A673 (cell line): ENCODE measurements at regions of chr5 and their contacts with region 1.

Region 1: GRCh38 chr5:172697123-172698121 is 56.4 kb downstream of the NEURL1B start:
- DNase-seq: peak; percentile 82
- H3K4me3 ChIP-seq: peak overlapping the region; percentile 55
- H3K27ac ChIP-seq: peak overlapping the region; percentile 75
- H3K4me1 ChIP-seq: no peaks in the 10 kb centered on the region
- H3K27me3 ChIP-seq: no peaks in the 10 kb centered on the region
- CTCF ChIP-seq: peak; percentile 80

Region 2: GRCh38 chr5:172106511-172107356 is 590.7 kb before region 1 on chr5:
- CTCF ChIA-PET with region 1: no interaction called
- POLR2A ChIA-PET with region 1: no interaction called
- intact Hi-C with region 1: loop called (anchors 5 kb)
- DNase-seq: peak; percentile 62
- H3K4me3 ChIP-seq: peak overlapping the region; percentile 39
- H3K27ac ChIP-seq: no peak overlapping the region
- H3K4me1 ChIP-seq: peaks cover 3% of the 10 kb centered on the region
- H3K27me3 ChIP-seq: no peaks in the 10 kb centered on the region
- CTCF ChIP-seq: peak; percentile 94

Region 3: GRCh38 chr5:172479044-172479783 is 218.2 kb before region 1 on chr5:
- CTCF ChIA-PET with region 1: no interaction called
- POLR2A ChIA-PET with region 1: no interaction called
- intact Hi-C with region 1: loop called (anchors 1 kb)
- DNase-seq: peak; percentile 87
- H3K4me3 ChIP-seq: no peak overlapping the region
- H3K27ac ChIP-seq: no peak overlapping the region
- H3K4me1 ChIP-seq: no peaks in the 10 kb centered on the region
- H3K27me3 ChIP-seq: no peaks in the 10 kb centered on the region
- CTCF ChIP-seq: peak; percentile 66

Region 4: GRCh38 chr5:173089581-173089980 is 392.2 kb after region 1 on chr5:
- CTCF ChIA-PET with region 1: no interaction called
- POLR2A ChIA-PET with region 1: no interaction called
- intact Hi-C with region 1: no loop called
- DNase-seq: no peak
- H3K4me3 ChIP-seq: no peak overlapping the region
- H3K27ac ChIP-seq: no peak overlapping the region
- H3K4me1 ChIP-seq: no peaks in the 10 kb centered on the region
- H3K27me3 ChIP-seq: no peaks in the 10 kb centered on the region
- CTCF ChIP-seq: no peak